MCF 10A (cell line): ENCODE measurements at regions of chr2 and their contacts with region 1.

Region 1: GRCh38 chr2:36544638-36545338 is 53.2 kb downstream of the FEZ2 start:
- DNase-seq: no peak
- H3K4me3 Mint-ChIP-seq: no peak overlapping the region
- H3K27ac Mint-ChIP-seq: peak overlapping the region; percentile 46
- H3K4me1 Mint-ChIP-seq: no peaks in the 10 kb centered on the region
- H3K27me3 Mint-ChIP-seq: no peaks in the 10 kb centered on the region
- CTCF ChIP-seq: peak; percentile 14

Region 2: GRCh38 chr2:36561237-36561944 is 16.6 kb after region 1 on chr2:
- CTCF ChIA-PET with region 1: interaction called, 7 read pairs
- POLR2A ChIA-PET with region 1: interaction called, 23 read pairs
- intact Hi-C with region 1: no loop called
- DNase-seq: peak; percentile 83
- H3K4me3 Mint-ChIP-seq: peak overlapping the region; percentile 46
- H3K27ac Mint-ChIP-seq: peak overlapping the region; percentile 98
- H3K4me1 Mint-ChIP-seq: peaks cover 45% of the 10 kb centered on the region
- H3K27me3 Mint-ChIP-seq: no peaks in the 10 kb centered on the region
- CTCF ChIP-seq: no peak